ENCODE measurements at regions of chr5 and their contacts with region 1.

Region 1: DNA sequence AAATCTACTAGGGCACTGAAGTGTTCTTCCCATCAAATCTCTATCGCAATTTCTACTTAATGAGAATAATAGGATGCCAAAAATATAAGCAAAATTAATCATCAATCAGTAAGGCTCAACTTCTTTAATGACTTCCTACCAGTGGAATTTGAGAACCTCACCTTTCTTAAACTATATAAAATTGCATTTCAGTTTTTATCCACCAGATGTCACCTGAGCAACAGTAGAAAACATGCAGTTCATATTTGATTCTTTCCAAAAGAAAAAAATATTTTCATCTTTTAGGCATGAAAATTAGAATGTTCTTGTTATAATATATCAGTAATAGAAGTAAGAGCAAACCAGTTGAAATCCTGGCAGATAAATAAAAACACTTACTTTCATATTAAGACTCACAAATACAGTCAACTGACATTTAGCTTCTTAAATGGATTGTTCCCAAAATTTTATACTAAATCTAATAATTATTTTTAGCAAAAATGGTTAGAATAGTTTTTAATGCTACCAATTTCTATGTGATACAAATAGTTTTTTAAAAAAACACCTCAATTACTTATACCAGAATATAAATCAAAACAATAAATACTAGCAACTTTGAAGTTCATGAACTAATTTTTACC is 13.4 kb upstream of the CCDC112 start:
- DNase-seq: no peak
- ATAC-seq: peak; percentile 49 to 68
- H3K4me3 ChIP-seq: no peak overlapping the region
- H3K27ac ChIP-seq: no peak overlapping the region
- H3K4me1 ChIP-seq: no peaks in the 10 kb centered on the region
- H3K27me3 ChIP-seq: no peaks in the 10 kb centered on the region
- CTCF ChIP-seq: peak; percentile 71 to 88 (median 79)
- POLR2A ChIP-seq: no peak

Region 2: GRCh38 chr5:115372146-115372545 is 62.3 kb after region 1 on chr5:
- in situ Hi-C with region 1: no loop called
- intact Hi-C with region 1: loop called (anchors 5 kb)
- DNase-seq: no peak
- ATAC-seq: peak in 1 of 2 donors; percentile 13
- H3K4me3 ChIP-seq: no peak overlapping the region
- H3K27ac ChIP-seq: peak overlapping the region; percentile 57 to 93 (median 76)
- H3K4me1 ChIP-seq: peaks cover 15 to 29% of the 10 kb centered on the region in 2 donors
- H3K27me3 ChIP-seq: no peaks in the 10 kb centered on the region
- CTCF ChIP-seq: no peak
- POLR2A ChIP-seq: no peak

Region 3: GRCh38 chr5:115579747-115580173 is 269.9 kb after region 1 on chr5:
- in situ Hi-C with region 1: loop called in 2 of 4 experiments (anchors 5 kb)
- intact Hi-C with region 1: loop called (anchors 1 kb)
- DNase-seq: no peak
- ATAC-seq: no peak
- H3K4me3 ChIP-seq: no peak overlapping the region
- H3K27ac ChIP-seq: no peak overlapping the region
- H3K4me1 ChIP-seq: no peaks in the 10 kb centered on the region
- H3K27me3 ChIP-seq: no peaks in the 10 kb centered on the region
- CTCF ChIP-seq: no peak
- POLR2A ChIP-seq: no peak

Region 4: GRCh38 chr5:115586601-115587048 is 276.8 kb after region 1 on chr5:
- in situ Hi-C with region 1: loop called in 3 of 4 experiments (anchors 5 kb)
- intact Hi-C with region 1: loop called (anchors 1 kb)
- DNase-seq: no peak
- ATAC-seq: peak; percentile 49 to 60
- H3K4me3 ChIP-seq: no peak overlapping the region
- H3K27ac ChIP-seq: peak overlapping the region in 2 of 4 donors; percentile 25 to 29
- H3K4me1 ChIP-seq: peaks cover 33 to 42% of the 10 kb centered on the region in 2 donors
- H3K27me3 ChIP-seq: no peaks in the 10 kb centered on the region
- CTCF ChIP-seq: peak; percentile 58 to 66 (median 64)
- POLR2A ChIP-seq: no peak

Region 5: DNA sequence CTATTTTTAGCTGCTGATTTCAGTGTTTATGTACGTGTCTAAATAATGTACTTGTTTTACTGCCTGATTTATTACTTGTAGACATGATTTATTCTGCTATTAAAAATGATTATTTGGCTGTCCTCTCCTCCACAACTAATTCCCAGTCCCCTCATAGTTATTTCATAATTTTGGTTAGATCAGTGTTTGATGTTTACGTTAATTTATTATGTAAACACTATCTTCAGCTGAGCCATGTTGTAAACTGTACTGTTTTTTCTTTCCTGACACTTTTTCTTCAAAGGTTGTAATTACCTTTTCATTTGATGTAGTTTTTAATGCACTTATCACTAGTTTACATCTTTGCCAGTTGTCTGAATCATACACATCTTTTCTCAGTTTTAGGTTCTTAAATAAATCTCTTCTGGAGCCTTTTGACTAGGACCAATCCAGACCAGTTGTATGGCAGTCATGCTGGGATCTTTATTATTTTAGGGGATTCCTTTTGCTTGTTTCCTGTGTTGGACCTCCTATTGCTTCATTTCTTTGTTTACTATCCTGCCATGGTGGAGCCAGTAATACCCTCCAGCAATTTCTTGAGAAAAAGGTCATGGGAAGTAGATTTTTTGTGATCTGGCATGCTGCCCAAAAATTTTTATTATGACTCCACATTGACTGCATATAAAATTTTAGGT is 547.9 kb after region 1 on chr5:
- in situ Hi-C with region 1: loop called in 1 of 4 experiments (anchors 25 kb)
- intact Hi-C with region 1: no loop called
- DNase-seq: no peak
- ATAC-seq: peak in 1 of 2 donors; percentile 38
- H3K4me3 ChIP-seq: no peak overlapping the region
- H3K27ac ChIP-seq: no peak overlapping the region
- H3K4me1 ChIP-seq: peaks cover 32 to 35% of the 10 kb centered on the region in 2 donors
- H3K27me3 ChIP-seq: no peaks in the 10 kb centered on the region
- CTCF ChIP-seq: no peak
- POLR2A ChIP-seq: no peak

Measured in gastrocnemius medialis (tissue), 4 donors.